ENCODE measurements at regions of chr4 and their contacts with region 1.

Region 1: GRCh38 chr4:169404960-169405359 is 134.2 kb upstream of the SH3RF1 start:
- DNase-seq: no peak
- ATAC-seq: peak; percentile 22; the same call in 2 of the 3 replicates
- H3K4me3 ChIP-seq: no peak overlapping the region
- H3K27ac ChIP-seq: no peak overlapping the region
- H3K4me1 ChIP-seq: peaks cover 9% of the 10 kb centered on the region
- H3K27me3 ChIP-seq: no peaks in the 10 kb centered on the region
- CTCF ChIP-seq: no peak
- EP300 ChIP-seq: no peak
- POLR2A ChIP-seq: no peak
- RAD21 ChIP-seq: no peak

Region 2: GRCh38 chr4:169099771-169100180 is 305.2 kb before region 1 on chr4:
- CTCF ChIA-PET with region 1: interaction called, 3 read pairs
- POLR2A ChIA-PET with region 1: no interaction called
- RAD21 ChIA-PET with region 1: no interaction called
- SMC1A ChIA-PET with region 1: interaction called, 4 read pairs
- in situ Hi-C with region 1: no loop called
- intact Hi-C with region 1: loop called (anchors 5 kb)
- DNase-seq: peak; percentile 34
- ATAC-seq: peak; percentile 8
- H3K4me3 ChIP-seq: no peak overlapping the region
- H3K27ac ChIP-seq: no peak overlapping the region
- H3K4me1 ChIP-seq: peaks cover 33% of the 10 kb centered on the region
- H3K27me3 ChIP-seq: no peaks in the 10 kb centered on the region
- CTCF ChIP-seq: no peak
- EP300 ChIP-seq: no peak
- POLR2A ChIP-seq: no peak
- RAD21 ChIP-seq: no peak

Region 3: DNA sequence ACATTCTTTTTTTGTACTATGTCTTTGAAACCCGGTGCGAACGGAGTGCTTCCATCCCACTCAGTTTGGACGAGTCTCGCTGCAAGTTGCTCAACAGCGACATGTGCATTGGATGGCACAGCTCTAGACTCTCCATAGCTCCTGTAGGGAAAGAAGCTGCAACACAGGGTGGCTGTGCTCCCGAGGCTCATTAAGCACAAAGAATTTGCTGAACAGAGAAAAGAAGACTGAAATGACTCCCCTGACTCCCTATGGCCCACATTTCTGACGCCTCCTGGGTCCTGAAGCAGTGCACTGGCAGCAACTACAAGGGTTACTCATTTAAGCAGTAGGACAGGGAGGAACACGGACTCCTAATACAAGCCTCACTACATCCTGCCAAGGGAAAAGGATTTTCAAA is 261.6 kb before region 1 on chr4:
- CTCF ChIA-PET with region 1: no interaction called
- POLR2A ChIA-PET with region 1: no interaction called
- RAD21 ChIA-PET with region 1: no interaction called
- SMC1A ChIA-PET with region 1: no interaction called
- in situ Hi-C with region 1: no loop called
- intact Hi-C with region 1: no loop called
- DNase-seq: no peak
- ATAC-seq: no peak
- H3K4me3 ChIP-seq: no peak overlapping the region
- H3K27ac ChIP-seq: no peak overlapping the region
- H3K4me1 ChIP-seq: no peaks in the 10 kb centered on the region; the same call in 1 of the 2 replicates
- H3K27me3 ChIP-seq: no peaks in the 10 kb centered on the region
- CTCF ChIP-seq: no peak
- EP300 ChIP-seq: no peak
- POLR2A ChIP-seq: no peak
- RAD21 ChIP-seq: no peak

Region 4: DNA sequence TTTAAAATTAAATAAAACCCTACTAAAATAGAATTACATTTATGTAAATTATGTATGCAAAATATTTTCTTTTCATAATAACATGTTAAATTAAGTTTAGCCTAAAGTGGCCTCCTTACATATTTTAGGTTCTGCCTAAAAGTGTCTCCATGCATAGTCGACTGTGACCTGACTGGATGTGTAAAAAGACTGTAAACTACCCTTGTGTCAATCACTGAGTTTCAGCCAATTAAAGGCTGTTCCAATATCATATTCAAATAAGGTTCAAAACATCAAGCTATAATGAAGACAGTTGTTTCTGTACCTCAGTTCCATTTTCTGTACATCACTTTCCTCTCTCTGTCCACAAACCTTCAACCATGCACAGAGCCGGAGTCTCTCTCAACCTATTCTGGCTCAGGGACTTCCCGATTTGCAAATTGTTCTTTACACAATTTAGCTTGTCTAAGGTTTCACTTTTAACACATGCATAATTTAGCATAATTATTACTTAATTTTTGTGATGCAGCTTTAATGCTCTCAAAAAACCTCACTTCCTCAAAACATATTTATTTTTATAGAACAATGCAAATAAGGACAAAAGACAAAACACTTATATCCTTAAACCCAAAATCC is 194.3 kb before region 1 on chr4:
- CTCF ChIA-PET with region 1: no interaction called
- POLR2A ChIA-PET with region 1: no interaction called
- RAD21 ChIA-PET with region 1: no interaction called
- SMC1A ChIA-PET with region 1: no interaction called
- in situ Hi-C with region 1: no loop called
- intact Hi-C with region 1: loop called (anchors 5 kb)
- DNase-seq: peak; percentile 78
- ATAC-seq: peak; percentile 96
- H3K4me3 ChIP-seq: peak overlapping the region; percentile 29; the same call in 1 of the 2 replicates
- H3K27ac ChIP-seq: peak overlapping the region; percentile 72
- H3K4me1 ChIP-seq: peaks cover 16% of the 10 kb centered on the region
- H3K27me3 ChIP-seq: no peaks in the 10 kb centered on the region
- CTCF ChIP-seq: no peak
- EP300 ChIP-seq: peak in 1 of 2 experiments; percentile 37; a peak in 1 of 4 replicates
- POLR2A ChIP-seq: no peak
- RAD21 ChIP-seq: no peak

Region 5: GRCh38 chr4:169311643-169312365 is 93.2 kb before region 1 on chr4:
- CTCF ChIA-PET with region 1: no interaction called
- POLR2A ChIA-PET with region 1: no interaction called
- RAD21 ChIA-PET with region 1: no interaction called
- SMC1A ChIA-PET with region 1: no interaction called
- in situ Hi-C with region 1: no loop called
- intact Hi-C with region 1: no loop called
- DNase-seq: peak; percentile 30
- ATAC-seq: peak; percentile 96
- H3K4me3 ChIP-seq: no peak overlapping the region
- H3K27ac ChIP-seq: no peak overlapping the region
- H3K4me1 ChIP-seq: no peaks in the 10 kb centered on the region
- H3K27me3 ChIP-seq: no peaks in the 10 kb centered on the region
- CTCF ChIP-seq: peak; percentile 42 to 45 (median 44)
- EP300 ChIP-seq: no peak
- POLR2A ChIP-seq: no peak
- RAD21 ChIP-seq: peak; percentile 71

Region 6: GRCh38 chr4:169416997-169417396 is 12.0 kb after region 1 on chr4:
- CTCF ChIA-PET with region 1: interaction called, 12 read pairs
- POLR2A ChIA-PET with region 1: interaction called, 3 read pairs
- RAD21 ChIA-PET with region 1: interaction called, 9 read pairs
- SMC1A ChIA-PET with region 1: interaction called, 76 read pairs
- in situ Hi-C with region 1: no loop called
- intact Hi-C with region 1: no loop called
- DNase-seq: no peak
- ATAC-seq: peak; percentile 90
- H3K4me3 ChIP-seq: no peak overlapping the region
- H3K27ac ChIP-seq: no peak overlapping the region
- H3K4me1 ChIP-seq: peaks cover 3% of the 10 kb centered on the region
- H3K27me3 ChIP-seq: no peaks in the 10 kb centered on the region
- CTCF ChIP-seq: no peak
- EP300 ChIP-seq: peak in 1 of 2 experiments; percentile 18; a peak in 1 of 4 replicates
- POLR2A ChIP-seq: no peak
- RAD21 ChIP-seq: 0 out of 2 replicates have a peak, but pooled peaks have one; percentile 8